ENCODE measurements at regions of chr22 and their contacts with region 1.

Region 1: DNA sequence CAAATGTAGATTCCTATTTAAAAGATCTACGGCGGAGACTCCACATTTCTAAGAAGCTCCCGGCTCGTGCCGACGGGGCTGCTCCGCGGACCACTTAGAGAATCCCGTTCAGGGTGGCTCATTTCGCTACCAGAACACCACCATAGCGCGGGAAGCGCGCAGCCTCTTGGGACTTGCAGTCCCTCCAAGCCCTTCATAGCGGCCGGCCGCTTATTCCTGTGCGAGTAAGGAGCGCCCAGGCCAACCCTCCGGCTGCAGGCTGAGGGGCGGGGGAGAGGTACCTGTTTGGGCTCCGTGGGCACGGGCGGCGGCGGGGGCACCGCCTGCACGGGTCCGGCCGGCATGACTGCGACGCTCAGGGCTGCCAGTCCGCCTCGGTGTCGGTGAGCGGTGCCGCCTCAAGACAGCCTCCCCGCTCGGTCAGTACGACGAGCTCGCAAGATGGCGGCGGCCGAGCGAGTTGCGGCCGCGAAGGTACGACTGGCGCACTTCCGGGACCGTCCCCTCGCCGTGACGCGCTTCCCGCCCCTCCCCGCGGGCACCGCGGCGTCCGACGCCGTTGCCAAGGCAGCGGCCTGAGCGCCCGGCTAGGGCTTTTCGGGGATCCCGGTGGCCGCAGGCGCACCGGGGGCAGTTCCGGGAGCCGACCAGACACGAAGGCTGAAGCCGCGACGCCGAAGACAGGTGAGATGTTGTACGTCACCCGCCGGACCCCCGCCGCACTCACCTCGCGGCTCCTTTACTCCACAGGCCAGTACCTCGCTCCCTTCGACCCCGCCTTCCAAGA is at the starts of genes CCDC157 and SF3A1:
- DNase-seq: peak; percentile 90
- H3K4me3 Mint-ChIP-seq: peak within 1 kb of the TSS; percentile 92
- H3K27ac Mint-ChIP-seq: peak within 1 kb of the TSS; percentile 78
- H3K4me1 Mint-ChIP-seq: peaks cover 49% of the 10 kb centered on the region
- H3K27me3 Mint-ChIP-seq: no peaks in the 10 kb centered on the region
- total RNA-seq, gene CCDC157: 3.2 to 3.6 TPM
- total RNA-seq, gene SF3A1: 225 to 226 TPM

Region 2: DNA sequence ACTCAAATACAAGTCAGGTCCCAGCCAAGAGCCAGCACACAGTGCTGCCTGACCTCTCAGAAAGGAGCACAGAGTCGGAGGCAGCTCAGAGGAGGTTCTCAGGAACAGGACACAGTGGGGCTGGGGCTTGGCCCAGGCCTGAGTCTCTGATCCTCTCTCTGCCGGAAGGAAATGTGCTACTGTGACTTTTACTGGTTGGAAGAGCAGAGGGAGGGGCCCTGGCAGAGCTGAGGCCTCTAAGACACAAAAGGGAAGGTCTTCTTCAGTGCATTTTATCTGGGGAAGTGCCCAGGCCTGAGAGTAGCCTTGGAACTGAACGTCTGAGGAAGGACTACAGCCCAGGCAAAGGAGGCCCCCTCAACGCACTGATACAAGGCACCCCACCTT is 51.1 kb before region 1 on chr22:
- CTCF ChIA-PET with region 1: no interaction called
- POLR2A ChIA-PET with region 1: interaction called, 25 read pairs
- DNase-seq: peak; percentile 79
- H3K4me3 Mint-ChIP-seq: peak overlapping the region; percentile 78
- H3K27ac Mint-ChIP-seq: peak overlapping the region; percentile 96
- H3K4me1 Mint-ChIP-seq: peaks cover 94% of the 10 kb centered on the region
- H3K27me3 Mint-ChIP-seq: no peaks in the 10 kb centered on the region

Region 3: GRCh38 chr22:30326706-30327362 is 29.8 kb before region 1 on chr22 and contains the start of gene TBC1D10A:
- CTCF ChIA-PET with region 1: interaction called, 4 read pairs
- POLR2A ChIA-PET with region 1: interaction called, 49 read pairs
- DNase-seq: peak; percentile 96
- H3K4me3 Mint-ChIP-seq: peak within 1 kb of the TSS; percentile 88
- H3K27ac Mint-ChIP-seq: peak within 1 kb of the TSS; percentile 74
- H3K4me1 Mint-ChIP-seq: peaks cover 49% of the 10 kb centered on the region
- H3K27me3 Mint-ChIP-seq: no peaks in the 10 kb centered on the region
- total RNA-seq, gene TBC1D10A: 37.9 to 41.6 TPM

Region 4: DNA sequence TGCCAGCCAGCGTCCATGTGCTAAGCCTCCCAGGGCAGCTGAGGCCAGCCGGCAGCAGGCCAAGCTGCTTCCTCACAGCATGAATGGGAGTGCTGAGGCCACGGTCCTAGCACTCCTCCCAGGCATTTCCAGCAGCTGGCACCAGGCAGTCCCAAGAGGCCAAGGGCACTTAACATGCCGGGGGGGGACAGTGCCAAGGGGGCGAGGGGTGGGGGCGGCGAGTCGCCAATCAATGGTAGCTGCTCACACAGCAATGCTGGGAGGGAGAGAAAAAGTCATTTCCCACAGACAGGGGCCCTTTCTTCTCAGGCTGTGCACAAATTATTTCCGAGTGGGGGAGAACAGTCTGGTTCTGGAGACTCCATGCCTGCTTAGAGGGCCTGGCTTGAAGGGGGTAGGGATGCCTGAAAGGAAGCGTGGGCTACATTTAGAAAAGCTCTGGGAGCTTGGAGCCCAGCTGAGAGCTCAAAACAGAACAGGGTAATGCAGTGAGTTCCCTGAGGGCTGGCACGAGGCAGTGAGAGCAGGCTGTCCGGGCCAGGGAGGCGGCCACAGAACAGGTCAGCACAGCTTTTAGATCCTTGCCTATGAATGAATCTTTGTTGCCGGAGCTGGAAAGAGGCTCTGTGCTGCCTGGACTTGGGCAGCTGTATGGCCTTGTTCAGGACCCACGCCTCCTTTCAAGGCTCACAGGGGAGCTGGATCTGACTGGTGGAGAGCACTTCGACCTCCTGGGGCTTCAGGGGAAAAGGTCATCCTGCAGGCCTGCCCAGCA is 15.5 kb before region 1 on chr22:
- CTCF ChIA-PET with region 1: no interaction called
- POLR2A ChIA-PET with region 1: interaction called, 19 read pairs
- DNase-seq: no peak
- H3K4me3 Mint-ChIP-seq: no peak overlapping the region
- H3K27ac Mint-ChIP-seq: no peak overlapping the region
- H3K4me1 Mint-ChIP-seq: peaks cover 24% of the 10 kb centered on the region
- H3K27me3 Mint-ChIP-seq: no peaks in the 10 kb centered on the region